Sciatic nerve (tissue), 2 donors: ENCODE measurements at regions of chr6 and their contacts with region 1.

Region 1: GRCh38 chr6:68634726-68635411 is at the start of gene ADGRB3:
- DNase-seq: peak; percentile 91
- ATAC-seq: peak; percentile 95
- total RNA-seq, gene ADGRB3: 8.5 TPM

Region 2: DNA sequence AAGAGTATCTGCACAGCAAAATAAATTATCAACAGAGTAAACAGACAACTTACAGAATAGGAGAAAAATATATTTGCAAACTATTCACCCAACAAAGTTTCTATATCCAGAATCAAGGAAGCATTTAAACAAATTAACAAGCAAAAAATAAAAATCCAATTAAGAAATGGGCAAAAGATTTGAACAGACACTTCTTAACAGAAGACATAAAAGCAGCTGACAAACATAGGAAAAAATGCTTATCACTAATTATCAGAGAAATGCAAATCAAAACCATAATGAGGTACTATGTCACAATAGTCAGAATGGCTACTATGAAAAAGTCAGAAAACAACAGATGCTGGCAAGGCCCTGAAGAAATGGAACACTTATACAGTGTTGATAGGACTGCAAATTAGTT is 433.9 kb before region 1 on chr6:
- intact Hi-C with region 1: no loop called
- DNase-seq: no peak
- ATAC-seq: no peak

Region 3: GRCh38 chr6:68615938-68616337 is 18.9 kb before region 1 on chr6:
- intact Hi-C with region 1: no loop called
- DNase-seq: no peak
- ATAC-seq: no peak

Region 4: DNA sequence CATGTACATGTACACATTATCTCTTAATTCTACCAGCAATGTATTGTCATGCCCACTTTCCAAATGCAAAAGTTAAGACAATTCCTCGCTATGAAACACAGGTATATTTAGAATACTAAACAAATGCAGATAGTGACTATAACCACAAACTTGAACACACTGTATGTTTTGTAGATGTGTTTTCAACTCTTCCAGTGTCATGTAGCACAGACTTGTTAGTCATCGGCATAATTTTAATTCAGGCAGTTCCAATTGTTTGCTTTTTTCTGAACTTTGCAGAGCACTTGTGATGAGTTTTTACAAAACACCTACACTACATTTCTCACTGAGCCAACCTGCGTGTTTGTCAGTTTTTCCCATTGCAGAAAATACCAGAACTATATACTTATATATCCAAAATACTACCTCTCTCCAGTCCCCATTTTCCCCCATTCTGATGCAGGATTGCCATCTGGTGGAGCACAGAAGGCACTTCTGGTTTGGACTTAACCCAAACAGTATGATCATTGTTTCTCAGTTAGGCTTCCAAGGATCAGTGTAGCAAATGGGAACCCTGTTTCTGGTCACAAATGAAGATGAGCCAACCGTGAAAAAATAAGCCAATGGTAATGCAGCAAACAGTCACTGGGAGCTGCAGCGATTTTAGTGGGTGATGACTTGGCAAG is 143.6 kb after region 1 on chr6:
- intact Hi-C with region 1: loop called (anchors 10 kb)
- DNase-seq: no peak
- ATAC-seq: peak; percentile 78